AG04449 (cell line): ENCODE measurements at regions of chr10 and their contacts with region 1.

Region 1: DNA sequence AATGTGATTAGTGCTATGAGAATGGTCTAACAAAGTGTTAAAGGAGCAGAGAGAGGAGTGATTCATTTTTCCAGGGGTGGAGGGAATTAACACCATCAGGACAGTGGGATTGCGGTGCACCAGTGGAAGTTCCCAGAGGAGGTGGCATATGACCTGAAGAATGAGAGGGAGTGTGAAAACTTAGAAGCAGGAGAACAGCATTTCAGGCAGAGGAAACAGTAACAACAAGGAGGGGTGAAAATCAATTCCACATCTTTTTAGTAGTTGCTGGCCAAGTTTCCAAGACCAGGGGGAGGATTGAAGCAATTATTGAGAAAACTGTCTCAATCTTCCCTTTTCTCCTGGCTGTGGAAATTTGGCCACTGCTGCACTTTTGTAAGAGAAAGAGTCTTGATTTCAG is 23.7 kb upstream of the CCDC172 start:
- DNase-seq: no peak
- H3K4me3 ChIP-seq: no peak overlapping the region
- CTCF ChIP-seq: no peak

Region 2: DNA sequence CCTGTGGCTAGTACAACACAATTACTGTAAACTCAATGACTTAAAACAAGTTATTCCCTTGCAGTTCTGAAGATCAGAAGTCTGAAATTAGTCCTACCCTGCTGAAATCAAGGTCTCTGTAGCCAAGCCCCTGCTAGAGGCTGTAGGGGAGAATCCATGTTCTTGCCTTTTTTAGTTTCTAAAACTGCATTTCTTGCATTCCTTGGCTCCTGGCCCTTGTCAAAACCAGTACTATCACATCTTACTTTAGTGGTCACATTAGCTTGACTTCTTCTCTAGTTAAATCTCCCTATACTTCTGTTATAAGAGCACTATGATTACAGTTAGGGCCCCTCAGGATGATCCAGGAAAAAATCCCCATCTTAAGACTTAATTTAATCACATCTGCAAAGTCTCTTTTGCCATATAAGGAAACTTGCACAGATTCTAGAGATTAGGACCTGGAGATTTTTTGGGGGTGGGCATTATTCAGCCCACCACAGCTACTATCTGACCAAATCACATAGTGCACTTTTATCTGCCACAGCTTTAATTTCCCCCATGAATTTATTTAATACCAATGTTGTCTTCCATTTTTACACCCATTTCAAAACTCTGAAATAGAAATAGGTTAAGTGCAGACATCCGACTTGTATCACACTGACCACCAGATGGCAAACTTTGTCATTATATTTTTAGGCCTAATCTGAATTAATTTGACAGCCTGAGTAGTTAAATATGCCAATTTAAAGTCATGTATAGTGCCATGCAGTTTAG is 594.3 kb before region 1 on chr10:
- CTCF ChIA-PET with region 1: interaction called, 11 read pairs
- POLR2A ChIA-PET with region 1: no interaction called
- DNase-seq: no peak
- H3K4me3 ChIP-seq: no peak overlapping the region
- CTCF ChIP-seq: peak; percentile 35

Region 3: GRCh38 chr10:117541909-117542705 is 1241.6 kb after region 1 on chr10:
- CTCF ChIA-PET with region 1: no interaction called
- POLR2A ChIA-PET with region 1: no interaction called
- DNase-seq: peak; percentile 93
- H3K4me3 ChIP-seq: peak overlapping the region; percentile 94
- CTCF ChIP-seq: no peak